PC-9 (cell line): ENCODE measurements at regions of chr6 and their contacts with region 1.

Region 1: GRCh38 chr6:66897576-66897975 is 1190.5 kb upstream of the EYS start:
- DNase-seq: no peak
- H3K4me3 ChIP-seq: no peak overlapping the region
- H3K27ac ChIP-seq: no peak overlapping the region
- H3K4me1 ChIP-seq: no peaks in the 10 kb centered on the region
- H3K27me3 ChIP-seq: no peaks in the 10 kb centered on the region
- CTCF ChIP-seq: no peak

Region 2: GRCh38 chr6:66623050-66623449 is 274.5 kb before region 1 on chr6:
- CTCF ChIA-PET with region 1: no interaction called
- POLR2A ChIA-PET with region 1: no interaction called
- intact Hi-C with region 1: no loop called
- DNase-seq: no peak
- H3K4me3 ChIP-seq: no peak overlapping the region
- H3K27ac ChIP-seq: no peak overlapping the region
- H3K4me1 ChIP-seq: no peaks in the 10 kb centered on the region
- H3K27me3 ChIP-seq: no peaks in the 10 kb centered on the region
- CTCF ChIP-seq: no peak

Region 3: GRCh38 chr6:66796987-66797386 is 100.6 kb before region 1 on chr6:
- CTCF ChIA-PET with region 1: no interaction called
- POLR2A ChIA-PET with region 1: no interaction called
- intact Hi-C with region 1: no loop called
- DNase-seq: no peak
- H3K4me3 ChIP-seq: no peak overlapping the region
- H3K27ac ChIP-seq: no peak overlapping the region
- H3K4me1 ChIP-seq: no peaks in the 10 kb centered on the region
- H3K27me3 ChIP-seq: no peaks in the 10 kb centered on the region
- CTCF ChIP-seq: no peak

Region 4: DNA sequence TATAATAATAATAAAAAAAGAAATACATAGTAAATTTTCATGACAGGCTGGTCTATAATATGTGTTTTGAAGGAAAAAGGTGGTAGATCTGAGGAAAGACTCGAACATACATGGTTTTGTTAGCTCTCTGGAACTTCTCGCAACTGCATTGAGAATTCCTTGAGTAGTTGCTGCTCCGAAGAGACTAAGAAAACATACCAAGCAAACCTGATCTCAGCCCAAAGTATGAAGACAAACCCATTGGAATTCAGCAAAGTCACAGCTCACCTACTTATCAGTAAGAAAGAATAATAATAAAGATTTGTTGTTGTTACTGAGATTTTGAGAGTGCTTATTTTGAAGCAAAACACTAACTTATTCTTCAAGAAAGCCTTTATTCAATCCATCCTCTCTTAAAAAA is 83.4 kb before region 1 on chr6:
- CTCF ChIA-PET with region 1: interaction called, 13 read pairs
- POLR2A ChIA-PET with region 1: no interaction called
- intact Hi-C with region 1: no loop called
- DNase-seq: no peak
- H3K4me3 ChIP-seq: no peak overlapping the region
- H3K27ac ChIP-seq: no peak overlapping the region
- H3K4me1 ChIP-seq: no peaks in the 10 kb centered on the region
- H3K27me3 ChIP-seq: no peaks in the 10 kb centered on the region
- CTCF ChIP-seq: no peak

Region 5: DNA sequence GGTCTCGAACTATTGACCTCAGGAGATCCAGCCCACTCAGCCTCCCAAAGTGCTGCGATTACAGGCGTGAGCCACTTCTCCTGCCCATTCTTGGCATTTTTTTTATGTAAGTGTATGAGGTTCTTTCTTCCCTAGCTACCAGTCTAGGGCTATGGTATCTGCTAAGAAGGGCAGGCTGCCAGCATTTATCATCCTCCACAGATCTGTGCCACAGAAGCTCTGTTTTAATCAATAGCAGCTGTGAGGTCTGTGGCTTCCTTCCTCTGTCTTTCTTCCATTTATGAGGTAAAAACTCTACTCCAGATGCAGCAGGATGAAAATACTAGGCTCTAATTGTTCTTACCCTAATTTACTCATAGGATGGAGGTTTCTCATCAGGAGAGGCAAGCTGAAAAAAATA is 355.1 kb after region 1 on chr6:
- CTCF ChIA-PET with region 1: no interaction called
- POLR2A ChIA-PET with region 1: no interaction called
- intact Hi-C with region 1: no loop called
- DNase-seq: no peak
- H3K4me3 ChIP-seq: no peak overlapping the region
- H3K27ac ChIP-seq: no peak overlapping the region
- H3K4me1 ChIP-seq: no peaks in the 10 kb centered on the region
- H3K27me3 ChIP-seq: no peaks in the 10 kb centered on the region
- CTCF ChIP-seq: no peak